PC-9 (cell line): ENCODE measurements at regions of chr15 and their contacts with region 1.

Region 1: GRCh38 chr15:41917767-41918430 is 24.0 kb upstream of the SPTBN5 start:
- DNase-seq: peak; percentile 70 to 81
- H3K4me3 ChIP-seq: no peak overlapping the region
- H3K27ac ChIP-seq: no peak overlapping the region
- H3K4me1 ChIP-seq: peaks cover 10% of the 10 kb centered on the region; the same call in 1 of the 2 replicates
- H3K27me3 ChIP-seq: no peaks in the 10 kb centered on the region
- CTCF ChIP-seq: no peak

Region 2: DNA sequence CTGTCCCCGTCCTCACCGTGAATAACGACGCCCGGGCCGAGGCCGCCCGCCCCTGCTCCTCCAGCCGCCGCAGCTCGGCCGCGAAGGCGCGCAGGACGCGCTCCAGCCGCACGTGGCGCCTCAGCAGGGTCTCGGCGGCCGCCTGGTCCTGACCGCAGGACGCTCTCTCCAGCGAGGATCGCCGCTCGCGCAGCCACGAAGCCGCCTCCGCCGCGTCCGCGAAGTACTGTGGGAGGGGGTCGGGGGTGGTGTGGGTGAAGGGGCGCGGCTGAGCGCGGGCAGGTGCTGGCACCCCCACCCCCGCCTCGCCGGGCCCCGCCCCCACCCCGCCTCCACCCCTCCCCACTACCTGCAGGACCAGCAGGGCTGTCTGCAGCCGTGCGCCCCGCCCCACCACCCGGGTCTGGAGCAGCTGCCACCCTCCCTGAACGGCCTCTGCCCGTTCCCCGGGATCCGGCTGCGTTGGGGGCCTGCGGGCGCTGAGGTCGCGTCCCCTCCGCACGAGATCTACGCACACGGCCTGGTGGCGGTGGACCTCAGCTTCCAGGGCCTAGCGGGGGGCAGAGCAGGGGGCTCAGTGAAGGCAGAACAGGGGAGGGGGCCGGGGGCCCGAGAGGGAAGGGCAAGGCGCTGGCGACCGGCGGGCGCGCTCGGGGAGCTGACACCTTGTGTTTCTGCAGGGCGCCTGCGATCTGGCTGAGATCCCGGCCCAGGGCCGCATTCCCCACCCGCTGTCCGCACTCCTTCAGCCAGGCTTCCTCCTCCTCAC is 35.8 kb before region 1 on chr15:
- CTCF ChIA-PET with region 1: no interaction called
- POLR2A ChIA-PET with region 1: no interaction called
- intact Hi-C with region 1: no loop called
- DNase-seq: peak in 1 of 2 experiments; percentile 61
- H3K4me3 ChIP-seq: peak overlapping the region; percentile 42; the same call in 1 of the 2 replicates
- H3K27ac ChIP-seq: no peak overlapping the region
- H3K4me1 ChIP-seq: no peaks in the 10 kb centered on the region
- H3K27me3 ChIP-seq: no peaks in the 10 kb centered on the region
- CTCF ChIP-seq: no peak

Region 3: GRCh38 chr15:43293402-43293801 is 1375.5 kb after region 1 on chr15:
- CTCF ChIA-PET with region 1: no interaction called
- POLR2A ChIA-PET with region 1: interaction called, 18 read pairs
- intact Hi-C with region 1: no loop called
- DNase-seq: no peak
- H3K4me3 ChIP-seq: no peak overlapping the region
- H3K27ac ChIP-seq: no peak overlapping the region
- H3K4me1 ChIP-seq: no peaks in the 10 kb centered on the region
- H3K27me3 ChIP-seq: no peaks in the 10 kb centered on the region
- CTCF ChIP-seq: no peak